Heart right ventricle (tissue), 16 donors: ENCODE measurements at regions of chr3 and their contacts with region 1.

Region 1: GRCh38 chr3:44477312-44478030 is at the start of gene ZNF445:
- DNase-seq: peak; percentile 78 to 84
- ATAC-seq: peak; percentile 94 to 99 (median 98)
- H3K4me3 ChIP-seq: peak within 1 kb of the TSS; percentile 62 to 88 (median 80)
- H3K27ac ChIP-seq: peak within 1 kb of the TSS in 9 of 10 donors; percentile 53 to 87 (median 78)
- H3K4me1 ChIP-seq: peaks cover 0 to 38% (median 16%) of the 10 kb centered on the region in 9 donors
- H3K27me3 ChIP-seq: no peaks in the 10 kb centered on the region
- CTCF ChIP-seq: no peak
- total RNA-seq, gene ZNF445: 11.3 to 18.6 (median 15.7) TPM

Region 2: GRCh38 chr3:44396200-44397171 is 81.0 kb before region 1 on chr3:
- intact Hi-C with region 1: loop called in 1 of 10 experiments (anchors 2 kb)
- DNase-seq: no peak
- ATAC-seq: no peak
- H3K4me3 ChIP-seq: no peak overlapping the region
- H3K27ac ChIP-seq: no peak overlapping the region
- H3K4me1 ChIP-seq: peaks cover 0 to 9% (median 0%) of the 10 kb centered on the region in 9 donors
- H3K27me3 ChIP-seq: no peaks in the 10 kb centered on the region
- CTCF ChIP-seq: no peak

Region 3: DNA sequence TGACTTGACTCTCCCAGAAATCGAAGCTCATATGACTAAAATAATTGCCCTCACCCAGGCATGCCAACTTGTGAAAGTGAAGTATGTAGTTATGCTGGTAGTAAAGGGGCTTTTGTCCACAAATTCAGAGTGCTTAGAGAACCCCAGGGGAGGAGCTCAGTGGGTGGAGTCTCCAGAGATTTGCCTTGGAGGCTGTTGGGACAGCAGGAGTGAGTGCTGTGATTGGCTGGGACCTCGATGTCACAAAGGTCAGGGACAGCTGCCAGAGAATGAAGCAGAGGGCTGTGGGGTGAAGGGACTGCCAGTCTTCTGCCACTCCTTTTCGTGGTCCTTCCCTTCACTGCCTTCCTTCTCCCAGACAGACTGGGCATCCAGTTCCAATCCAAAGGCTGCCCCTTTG is 49.8 kb before region 1 on chr3:
- intact Hi-C with region 1: no loop called
- DNase-seq: no peak
- ATAC-seq: no peak
- H3K4me3 ChIP-seq: no peak overlapping the region
- H3K27ac ChIP-seq: no peak overlapping the region
- H3K4me1 ChIP-seq: peaks cover 0 to 4% (median 0%) of the 10 kb centered on the region in 9 donors
- H3K27me3 ChIP-seq: no peaks in the 10 kb centered on the region
- CTCF ChIP-seq: no peak

Region 4: GRCh38 chr3:44439499-44440295 is 37.8 kb before region 1 on chr3:
- intact Hi-C with region 1: loop called in 1 of 10 experiments (anchors 5 kb)
- DNase-seq: peak; percentile 51 to 91
- ATAC-seq: peak; percentile 91 to 98 (median 96)
- H3K4me3 ChIP-seq: peak overlapping the region in 9 of 10 donors; percentile 15 to 50 (median 36)
- H3K27ac ChIP-seq: peak overlapping the region; percentile 84 to 98 (median 92)
- H3K4me1 ChIP-seq: peaks cover 0 to 49% (median 27%) of the 10 kb centered on the region in 9 donors
- H3K27me3 ChIP-seq: no peaks in the 10 kb centered on the region
- CTCF ChIP-seq: no peak

Region 5: DNA sequence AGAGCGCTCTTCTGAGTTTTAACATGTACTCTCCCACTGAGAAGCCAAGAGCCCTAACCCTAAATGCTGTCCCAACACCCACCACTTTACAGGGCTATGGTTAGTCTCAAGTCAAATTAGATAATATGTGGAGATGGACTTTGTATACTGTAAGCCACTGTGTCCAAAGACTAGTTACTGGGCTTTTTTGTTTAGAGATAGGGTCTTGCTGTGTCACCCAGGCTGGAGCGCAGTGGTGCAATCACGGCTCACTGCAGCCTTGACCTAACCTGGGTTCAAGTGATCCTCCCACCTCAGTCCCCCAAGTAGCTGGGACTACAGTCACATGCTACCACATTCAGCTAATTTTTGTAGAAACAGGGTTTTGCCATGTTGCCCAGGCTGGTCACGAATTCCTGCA is 23.2 kb before region 1 on chr3:
- intact Hi-C with region 1: no loop called
- DNase-seq: no peak
- ATAC-seq: no peak
- H3K4me3 ChIP-seq: no peak overlapping the region
- H3K27ac ChIP-seq: no peak overlapping the region
- H3K4me1 ChIP-seq: no peaks in the 10 kb centered on the region
- H3K27me3 ChIP-seq: no peaks in the 10 kb centered on the region
- CTCF ChIP-seq: no peak